Vagina (tissue), 2 donors: ENCODE measurements at regions of chr17 and their contacts with region 1.

Region 1: GRCh38 chr17:15502369-15503112 is 35.1 kb upstream of the CDRT4 start:
- DNase-seq: peak in 1 of 2 donors; percentile 94
- H3K4me3 ChIP-seq: peak overlapping the region; percentile 30 to 34
- H3K27ac ChIP-seq: peak overlapping the region; percentile 88
- H3K4me1 ChIP-seq: peaks cover 16% of the 10 kb centered on the region
- H3K27me3 ChIP-seq: no peaks in the 10 kb centered on the region
- CTCF ChIP-seq: peak; percentile 60 to 89 (median 76)
- POLR2A ChIP-seq: no peak

Region 2: DNA sequence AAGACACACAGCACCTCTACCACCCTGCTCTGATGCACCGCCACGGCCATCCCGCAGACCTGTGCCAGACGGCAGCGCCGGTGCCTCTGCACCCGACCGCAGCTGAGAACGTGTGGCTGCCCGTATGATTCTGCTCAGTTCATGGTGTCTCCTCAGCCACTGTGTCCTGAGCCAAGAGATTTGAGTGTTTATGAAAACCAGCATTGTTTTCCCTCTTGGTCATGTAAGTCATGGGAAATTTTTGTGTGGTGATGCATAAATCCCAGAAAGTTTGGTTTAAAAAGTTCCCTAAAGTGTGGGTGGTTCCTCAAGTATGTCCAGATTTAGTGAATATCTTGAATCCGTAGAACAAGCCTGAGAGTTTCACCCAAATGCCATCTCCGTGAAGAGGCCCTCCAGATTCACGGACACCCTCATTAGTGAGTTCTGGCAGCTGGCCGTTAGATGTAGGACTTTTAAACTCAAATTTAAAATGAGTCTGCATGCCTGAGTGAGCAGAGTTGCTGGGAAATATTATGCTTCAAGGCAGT is 92.8 kb before region 1 on chr17:
- intact Hi-C with region 1: loop called (anchors 10 kb)
- DNase-seq: no peak
- H3K4me3 ChIP-seq: peak overlapping the region in 1 of 2 donors; percentile 27
- H3K27ac ChIP-seq: peak overlapping the region; percentile 85
- H3K4me1 ChIP-seq: peaks cover 31% of the 10 kb centered on the region
- H3K27me3 ChIP-seq: no peaks in the 10 kb centered on the region
- CTCF ChIP-seq: no peak
- POLR2A ChIP-seq: peak in 1 of 2 donors; percentile 26

Region 3: DNA sequence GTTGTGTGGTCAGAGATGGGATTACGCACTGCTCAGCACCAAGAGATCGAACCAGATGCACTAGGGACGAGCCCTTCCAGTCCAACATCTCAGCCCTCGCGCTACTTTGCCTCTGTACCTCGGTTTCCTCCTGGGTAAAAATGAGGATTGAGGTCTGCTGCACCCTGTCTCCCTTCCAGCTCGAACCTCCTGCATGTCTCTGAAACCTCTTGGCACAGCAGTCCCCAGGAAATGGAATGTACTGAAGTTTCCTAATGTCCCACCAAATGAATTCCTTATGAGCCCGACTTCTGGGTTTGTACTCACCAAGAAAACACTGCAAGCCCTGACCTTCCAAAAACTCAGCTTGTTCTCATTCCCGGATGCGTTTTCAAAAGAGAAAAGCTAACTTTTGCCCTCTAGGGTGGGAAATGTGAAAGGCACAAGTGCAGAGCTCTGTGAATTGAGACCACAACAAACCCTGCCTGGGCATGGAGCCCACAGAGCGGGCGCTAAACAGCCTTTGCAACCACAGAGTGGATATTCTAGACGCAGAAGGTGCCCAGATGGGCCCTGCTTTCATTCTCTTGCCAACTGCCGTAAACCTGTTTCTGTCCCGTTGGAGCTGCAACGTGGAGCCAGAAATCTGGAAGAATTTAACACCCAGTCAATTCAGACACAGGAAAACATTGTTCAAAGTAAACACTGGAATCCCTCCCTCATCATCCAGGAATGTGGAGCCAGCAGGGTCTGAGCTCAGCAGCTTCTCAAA is 45.4 kb before region 1 on chr17:
- intact Hi-C with region 1: loop called (anchors 5 kb)
- DNase-seq: no peak
- H3K4me3 ChIP-seq: peak overlapping the region in 1 of 2 donors; percentile 16
- H3K27ac ChIP-seq: peak overlapping the region; percentile 83
- H3K4me1 ChIP-seq: peaks cover 46% of the 10 kb centered on the region
- H3K27me3 ChIP-seq: no peaks in the 10 kb centered on the region
- CTCF ChIP-seq: no peak
- POLR2A ChIP-seq: no peak